HCT116 (cell line): ENCODE measurements at regions of chr6 and their contacts with region 1.

Region 1: DNA sequence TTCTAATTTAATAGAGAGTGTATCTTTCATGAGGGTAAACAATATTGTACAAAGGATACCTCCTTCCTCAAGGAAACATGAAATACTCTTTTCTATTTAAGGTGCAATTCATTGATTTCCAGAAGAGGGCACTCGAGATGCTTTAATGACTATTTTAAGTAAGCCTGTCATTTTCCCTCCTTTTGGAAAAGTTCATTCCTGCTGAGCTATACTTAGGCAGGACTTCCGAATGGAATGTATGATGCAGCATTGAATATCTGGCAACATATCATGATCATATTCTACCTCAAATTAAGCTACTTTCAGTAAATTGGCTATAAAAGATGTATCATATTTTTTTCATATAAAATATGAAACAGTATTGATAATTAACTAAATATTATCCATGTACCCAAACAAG is 5.0 kb downstream of the DST start:
- DNase-seq: peak; percentile 49
- ATAC-seq: peak; percentile 70
- H3K4me3 ChIP-seq: no peak overlapping the region
- H3K27ac ChIP-seq: no peak overlapping the region; the same call in 1 of the 2 replicates
- H3K4me1 ChIP-seq: peaks cover 4% of the 10 kb centered on the region in 2 experiments
- H3K27me3 ChIP-seq: no peaks in the 10 kb centered on the region
- CTCF ChIP-seq: peak; percentile 28 to 69 (median 60); a peak in 4 of 6 replicates
- POLR2A ChIP-seq: no peak
- RAD21 ChIP-seq: peak; percentile 80

Region 2: GRCh38 chr6:56499095-56499494 is 138.5 kb before region 1 on chr6:
- CTCF ChIA-PET with region 1: no interaction called
- POLR2A ChIA-PET with region 1: no interaction called
- RAD21 ChIA-PET with region 1: no interaction called
- intact Hi-C with region 1: no loop called
- DNase-seq: no peak
- ATAC-seq: no peak
- H3K4me3 ChIP-seq: no peak overlapping the region
- H3K27ac ChIP-seq: no peak overlapping the region
- H3K4me1 ChIP-seq: no peaks in the 10 kb centered on the region
- H3K27me3 ChIP-seq: no peaks in the 10 kb centered on the region
- CTCF ChIP-seq: no peak
- POLR2A ChIP-seq: no peak
- RAD21 ChIP-seq: no peak

Region 3: GRCh38 chr6:56541030-56541600 is 96.5 kb before region 1 on chr6:
- CTCF ChIA-PET with region 1: no interaction called
- POLR2A ChIA-PET with region 1: no interaction called
- RAD21 ChIA-PET with region 1: no interaction called
- intact Hi-C with region 1: no loop called
- DNase-seq: no peak
- ATAC-seq: no peak
- H3K4me3 ChIP-seq: no peak overlapping the region
- H3K27ac ChIP-seq: no peak overlapping the region
- H3K4me1 ChIP-seq: peaks cover 3 to 15% of the 10 kb centered on the region in 2 experiments; a peak in 3 of 4 replicates
- H3K27me3 ChIP-seq: no peaks in the 10 kb centered on the region
- CTCF ChIP-seq: no peak
- POLR2A ChIP-seq: no peak
- RAD21 ChIP-seq: no peak

Region 4: DNA sequence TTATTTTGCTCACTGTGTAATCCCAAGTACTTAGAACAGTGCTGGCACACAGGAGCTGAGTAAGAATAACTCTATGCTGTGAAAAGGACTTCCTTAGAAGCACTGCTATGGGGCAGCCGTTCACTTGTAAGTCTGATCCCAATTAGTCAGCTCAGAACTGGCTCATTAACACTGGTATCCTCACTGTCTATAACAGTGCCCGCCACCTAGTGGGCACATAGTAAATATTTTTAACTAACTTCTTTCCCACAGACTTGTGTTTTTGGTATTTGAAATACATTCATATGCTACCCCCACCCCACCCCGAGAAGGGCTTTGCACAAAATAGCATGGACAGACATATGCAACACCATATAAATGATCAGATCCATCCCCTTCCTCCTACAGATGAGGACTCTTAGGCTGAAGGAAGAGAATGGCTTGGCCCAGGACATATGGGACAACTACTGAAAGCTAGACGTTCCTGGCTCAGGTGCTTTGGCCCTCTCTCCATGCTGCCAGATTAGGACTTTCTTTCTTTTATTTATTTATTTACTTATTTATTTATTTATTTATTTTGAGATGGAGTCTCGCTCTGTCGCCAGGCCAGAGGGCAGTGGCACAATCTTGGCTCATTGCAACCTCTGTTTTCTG is 42.0 kb before region 1 on chr6:
- CTCF ChIA-PET with region 1: no interaction called
- POLR2A ChIA-PET with region 1: no interaction called
- RAD21 ChIA-PET with region 1: no interaction called
- intact Hi-C with region 1: no loop called
- DNase-seq: peak; percentile 12
- ATAC-seq: peak; percentile 80
- H3K4me3 ChIP-seq: no peak overlapping the region
- H3K27ac ChIP-seq: no peak overlapping the region
- H3K4me1 ChIP-seq: no peaks in the 10 kb centered on the region
- H3K27me3 ChIP-seq: no peaks in the 10 kb centered on the region
- CTCF ChIP-seq: peak; percentile 40 to 70 (median 59); a peak in 5 of 6 replicates
- POLR2A ChIP-seq: no peak
- RAD21 ChIP-seq: peak; percentile 45

Region 5: GRCh38 chr6:56699066-56699654 is 61.5 kb after region 1 on chr6:
- CTCF ChIA-PET with region 1: interaction called, 11 read pairs
- POLR2A ChIA-PET with region 1: no interaction called
- RAD21 ChIA-PET with region 1: interaction called in 1 of 2 experiments, 4 read pairs
- intact Hi-C with region 1: loop called (anchors 1 kb)
- DNase-seq: no peak
- ATAC-seq: peak; percentile 49
- H3K4me3 ChIP-seq: no peak overlapping the region
- H3K27ac ChIP-seq: no peak overlapping the region
- H3K4me1 ChIP-seq: peaks cover 19 to 20% of the 10 kb centered on the region in 2 experiments
- H3K27me3 ChIP-seq: no peaks in the 10 kb centered on the region
- CTCF ChIP-seq: peak in 2 of 3 experiments; percentile 59; a peak in 3 of 6 replicates
- POLR2A ChIP-seq: no peak
- RAD21 ChIP-seq: peak; percentile 62

Region 6: GRCh38 chr6:57108691-57109090 is 471.1 kb after region 1 on chr6:
- CTCF ChIA-PET with region 1: no interaction called
- POLR2A ChIA-PET with region 1: no interaction called
- RAD21 ChIA-PET with region 1: no interaction called
- intact Hi-C with region 1: no loop called
- DNase-seq: no peak
- ATAC-seq: no peak
- H3K4me3 ChIP-seq: no peak overlapping the region
- H3K27ac ChIP-seq: no peak overlapping the region
- H3K4me1 ChIP-seq: no peaks in the 10 kb centered on the region
- H3K27me3 ChIP-seq: no peaks in the 10 kb centered on the region
- CTCF ChIP-seq: no peak
- POLR2A ChIP-seq: no peak
- RAD21 ChIP-seq: no peak